ENCODE measurements at regions of chr17 and their contacts with region 1.

Region 1: GRCh38 chr17:13187656-13188055 is 169.8 kb upstream of the ELAC2 start:
- DNase-seq: no peak
- ATAC-seq: no peak
- H3K4me3 ChIP-seq: no peak overlapping the region
- H3K27ac ChIP-seq: no peak overlapping the region
- H3K4me1 ChIP-seq: no peaks in the 10 kb centered on the region
- CTCF ChIP-seq: no peak
- EP300 ChIP-seq: no peak
- POLR2A ChIP-seq: no peak
- RAD21 ChIP-seq: no peak

Region 2: DNA sequence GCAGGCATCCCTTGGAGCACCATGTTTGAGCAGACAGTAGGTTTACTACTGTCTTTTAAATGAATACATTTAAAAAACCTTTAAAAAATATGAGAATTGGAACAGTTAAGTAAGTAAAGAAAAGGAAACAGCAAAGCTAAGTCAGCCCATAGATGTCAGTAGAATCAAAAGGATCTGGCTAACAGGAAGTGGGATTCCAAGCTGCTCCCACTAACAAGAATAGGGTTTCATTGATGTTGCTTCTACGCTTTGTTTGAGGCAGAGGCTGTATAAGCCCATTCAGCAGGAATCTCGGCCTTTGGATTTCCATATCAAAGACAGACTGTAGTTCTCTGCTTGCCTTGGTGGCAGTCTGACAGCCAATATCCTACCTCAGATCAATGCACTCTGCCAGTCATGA is 46.9 kb before region 1 on chr17:
- CTCF ChIA-PET with region 1: no interaction called
- POLR2A ChIA-PET with region 1: interaction called, 11 read pairs
- DNase-seq: no peak
- ATAC-seq: no peak
- H3K4me3 ChIP-seq: no peak overlapping the region
- H3K27ac ChIP-seq: no peak overlapping the region
- H3K4me1 ChIP-seq: no peaks in the 10 kb centered on the region
- CTCF ChIP-seq: no peak
- EP300 ChIP-seq: no peak
- POLR2A ChIP-seq: no peak
- RAD21 ChIP-seq: no peak

Region 3: GRCh38 chr17:13597723-13598347 is 410.2 kb after region 1 on chr17:
- CTCF ChIA-PET with region 1: no interaction called
- POLR2A ChIA-PET with region 1: no interaction called
- DNase-seq: peak; percentile 41 to 59
- ATAC-seq: peak; percentile 41 to 66; a peak in 4 of 6 replicates
- H3K4me3 ChIP-seq: no peak overlapping the region
- H3K27ac ChIP-seq: no peak overlapping the region
- H3K4me1 ChIP-seq: no peaks in the 10 kb centered on the region
- CTCF ChIP-seq: peak; percentile 87
- EP300 ChIP-seq: no peak
- POLR2A ChIP-seq: no peak
- RAD21 ChIP-seq: peak; percentile 77 to 86